H1 (cell line): ENCODE measurements at regions of chr19 and their contacts with region 1.

Region 1: GRCh38 chr19:6737284-6738046 is at the start of gene GPR108:
- DNase-seq: peak; percentile 99
- H3K4me3 ChIP-seq: peak within 1 kb of the TSS; percentile 50 to 86 (median 69)
- H3K27ac ChIP-seq: peak within 1 kb of the TSS; percentile 97
- H3K4me1 ChIP-seq: peaks cover 4 to 28% (median 16%) of the 10 kb centered on the region in 4 experiments
- H3K27me3 ChIP-seq: no peaks in the 10 kb centered on the region
- CTCF ChIP-seq: peak in 1 of 3 experiments; percentile 10; a peak in 1 of 4 replicates
- EP300 ChIP-seq: peak in 1 of 2 experiments; percentile 100; a peak in 2 of 3 replicates
- POLR2A ChIP-seq: peak in 1 of 2 experiments; percentile 69; a peak in 2 of 3 replicates
- RAD21 ChIP-seq: peak in 1 of 2 experiments; percentile 11; a peak in 1 of 4 replicates
- total RNA-seq, gene GPR108: 34.9 and 35.3 TPM in 2 replicates

Region 2: GRCh38 chr19:6530386-6531161 is 206.9 kb before region 1 on chr19 and contains the start of gene TNFSF9:
- CTCF ChIA-PET with region 1: no interaction called
- POLR2A ChIA-PET with region 1: interaction called, 10 read pairs
- DNase-seq: peak in 1 of 2 experiments; percentile 96
- H3K4me3 ChIP-seq: peak within 1 kb of the TSS; percentile 68 to 89 (median 72)
- H3K27ac ChIP-seq: no peak within 1 kb of the TSS
- H3K4me1 ChIP-seq: peaks cover 5 to 29% (median 19%) of the 10 kb centered on the region in 4 experiments
- H3K27me3 ChIP-seq: peaks cover 17 to 42% (median 39%) of the 10 kb centered on the region in 4 experiments
- CTCF ChIP-seq: no peak
- EP300 ChIP-seq: no peak
- POLR2A ChIP-seq: peak; percentile 81 to 95
- RAD21 ChIP-seq: no peak
- total RNA-seq, gene TNFSF9: 1.7 and 1.8 TPM in 2 replicates

Region 3: DNA sequence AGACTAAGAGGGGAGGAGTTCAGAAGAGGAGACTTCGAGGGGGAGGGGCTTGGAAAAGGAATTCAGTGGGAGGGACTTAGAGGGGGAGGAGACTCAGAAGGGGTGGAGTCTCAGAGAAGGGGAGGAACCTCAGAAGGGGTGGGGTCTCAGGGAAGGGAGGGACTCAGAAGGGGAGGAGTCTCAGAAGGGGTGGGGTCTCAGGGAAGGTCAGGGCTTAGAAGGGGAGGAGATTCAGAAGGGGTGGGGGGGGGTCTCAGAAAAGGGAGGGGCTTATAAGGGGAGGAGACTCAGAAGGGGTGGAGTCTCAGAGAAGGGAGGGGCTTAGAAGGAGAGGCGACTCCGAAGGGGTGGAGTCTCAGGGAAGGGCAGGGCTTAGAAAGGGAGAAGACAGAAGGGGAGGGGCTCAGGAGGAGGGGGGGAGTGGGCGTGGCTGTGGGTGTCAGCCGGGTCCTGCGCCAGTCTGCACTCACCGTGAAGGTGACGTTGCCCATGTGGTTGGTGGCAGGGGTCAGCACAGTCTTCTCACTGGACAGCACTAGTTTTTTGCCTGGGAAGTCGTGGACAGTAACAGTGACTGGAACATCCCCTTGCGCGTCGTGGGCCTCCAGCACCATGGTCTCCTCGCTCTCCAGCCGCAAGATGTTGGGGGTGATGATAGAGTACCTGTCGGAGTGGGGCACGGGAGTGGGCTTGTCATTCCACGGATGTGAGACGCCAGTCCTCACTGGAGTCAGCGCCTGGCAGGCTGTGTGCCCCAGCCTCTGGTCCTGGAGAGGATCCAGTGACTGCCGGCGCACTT is 18.5 kb before region 1 on chr19:
- CTCF ChIA-PET with region 1: interaction called, 31 read pairs
- POLR2A ChIA-PET with region 1: interaction called, 14 read pairs
- DNase-seq: no peak
- H3K4me3 ChIP-seq: no peak overlapping the region
- H3K27ac ChIP-seq: no peak overlapping the region
- H3K4me1 ChIP-seq: peaks cover 0 to 12% (median 6%) of the 10 kb centered on the region in 4 experiments; a peak in 4 of 7 replicates
- H3K27me3 ChIP-seq: no peaks in the 10 kb centered on the region; a peak in 1 of 7 replicates
- CTCF ChIP-seq: no peak
- EP300 ChIP-seq: no peak
- POLR2A ChIP-seq: no peak
- RAD21 ChIP-seq: no peak

Region 4: GRCh38 chr19:6753178-6754031 is 15.9 kb after region 1 on chr19:
- CTCF ChIA-PET with region 1: interaction called, 12 read pairs
- POLR2A ChIA-PET with region 1: interaction called, 110 read pairs
- DNase-seq: peak; percentile 97 to 100
- H3K4me3 ChIP-seq: peak overlapping the region; percentile 11 to 61 (median 47)
- H3K27ac ChIP-seq: peak overlapping the region; percentile 82
- H3K4me1 ChIP-seq: peaks cover 0 to 7% (median 5%) of the 10 kb centered on the region in 4 experiments; a peak in 6 of 7 replicates
- H3K27me3 ChIP-seq: no peaks in the 10 kb centered on the region
- CTCF ChIP-seq: peak; percentile 43 to 62 (median 52)
- EP300 ChIP-seq: 0 out of 3 replicates have a peak, but pooled peaks of 1 of the 2 experiments have one; percentile 3
- POLR2A ChIP-seq: peak; percentile 48 to 75
- RAD21 ChIP-seq: peak; percentile 54

Region 5: GRCh38 chr19:6767357-6768235 is 30.1 kb after region 1 on chr19 and contains the start of gene SH2D3A:
- CTCF ChIA-PET with region 1: interaction called, 31 read pairs
- POLR2A ChIA-PET with region 1: interaction called, 32 read pairs
- DNase-seq: peak; percentile 96 to 98
- H3K4me3 ChIP-seq: peak within 1 kb of the TSS; percentile 61 to 84 (median 83)
- H3K27ac ChIP-seq: peak within 1 kb of the TSS; percentile 57
- H3K4me1 ChIP-seq: peaks cover 3 to 7% (median 5%) of the 10 kb centered on the region in 4 experiments; a peak in 6 of 7 replicates
- H3K27me3 ChIP-seq: no peaks in the 10 kb centered on the region
- CTCF ChIP-seq: no peak
- EP300 ChIP-seq: 0 out of 3 replicates have a peak, but pooled peaks of 1 of the 2 experiments have one; percentile 29
- POLR2A ChIP-seq: peak in 1 of 2 experiments; percentile 79; a peak in 2 of 3 replicates
- RAD21 ChIP-seq: no peak
- total RNA-seq, gene SH2D3A: 20.0 and 22.1 TPM in 2 replicates

Region 6: DNA sequence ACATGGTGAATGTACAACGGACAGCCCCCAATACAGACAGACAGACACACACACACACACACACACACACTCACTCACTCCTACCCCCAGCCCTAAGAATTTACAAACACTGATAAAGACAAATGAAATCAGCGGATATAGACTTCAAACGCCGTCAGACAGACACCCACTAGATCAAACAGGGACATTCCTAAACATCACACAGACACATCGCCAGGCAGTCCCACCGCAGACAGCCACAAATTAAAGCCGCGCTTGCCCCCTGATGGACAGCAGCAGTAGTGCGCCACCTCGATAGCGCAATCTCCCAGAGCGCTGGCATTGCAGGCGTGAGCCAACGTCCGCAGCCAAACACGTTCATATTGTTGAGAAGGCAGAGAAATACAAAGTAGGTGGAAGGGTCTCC is 125.2 kb after region 1 on chr19:
- CTCF ChIA-PET with region 1: interaction called, 19 read pairs
- POLR2A ChIA-PET with region 1: interaction called, 3 read pairs
- DNase-seq: peak; percentile 49 to 88
- H3K4me3 ChIP-seq: no peak overlapping the region
- H3K27ac ChIP-seq: no peak overlapping the region
- H3K4me1 ChIP-seq: no peaks in the 10 kb centered on the region
- H3K27me3 ChIP-seq: no peaks in the 10 kb centered on the region
- CTCF ChIP-seq: peak; percentile 85 to 97 (median 93)
- EP300 ChIP-seq: no peak
- POLR2A ChIP-seq: no peak
- RAD21 ChIP-seq: peak; percentile 91 to 92

Region 7: DNA sequence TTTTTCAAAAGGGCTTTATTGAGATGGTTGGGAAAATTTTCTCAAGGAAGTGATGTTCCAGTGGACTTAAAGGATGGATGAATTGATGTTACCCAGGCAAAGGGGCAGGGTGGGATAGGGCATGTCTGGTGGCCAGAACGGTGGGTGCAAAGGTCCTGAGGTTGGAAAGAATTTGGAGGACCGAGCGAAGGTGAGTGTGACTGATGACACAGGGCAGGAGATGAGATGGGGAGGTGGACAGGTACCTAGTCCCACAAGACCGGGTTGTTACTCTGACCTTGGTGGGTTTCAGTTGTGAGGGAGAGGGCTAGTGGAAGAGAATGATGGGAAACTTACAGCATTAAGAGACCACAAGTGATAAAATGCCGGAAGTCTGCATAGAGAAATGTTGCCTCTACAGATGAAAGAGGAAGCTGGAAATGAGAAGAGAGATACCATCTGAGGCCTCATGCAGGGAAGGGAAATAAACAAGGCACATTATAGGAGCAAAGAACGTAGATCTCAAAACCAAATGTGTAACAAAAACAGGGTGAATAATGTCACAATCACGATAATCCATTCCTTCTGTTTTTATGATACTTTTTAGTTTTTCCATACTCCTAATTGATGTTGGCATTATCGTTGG is 154.4 kb after region 1 on chr19:
- CTCF ChIA-PET with region 1: no interaction called
- POLR2A ChIA-PET with region 1: no interaction called
- DNase-seq: no peak
- H3K4me3 ChIP-seq: no peak overlapping the region
- H3K27ac ChIP-seq: no peak overlapping the region
- H3K4me1 ChIP-seq: no peaks in the 10 kb centered on the region
- H3K27me3 ChIP-seq: no peaks in the 10 kb centered on the region
- CTCF ChIP-seq: no peak
- EP300 ChIP-seq: no peak
- POLR2A ChIP-seq: no peak
- RAD21 ChIP-seq: no peak